ENCODE measurements at regions of chr6 and their contacts with region 1.

Region 1: GRCh38 chr6:163913045-163913444 is 498.5 kb downstream of the QKI start:
- DNase-seq: no peak
- ATAC-seq: no peak
- H3K4me3 ChIP-seq: no peak overlapping the region
- H3K4me3 Mint-ChIP-seq: no peak overlapping the region
- H3K27ac ChIP-seq: no peak overlapping the region
- H3K27ac Mint-ChIP-seq: no peak overlapping the region
- H3K4me1 ChIP-seq: no peaks in the 10 kb centered on the region
- H3K4me1 Mint-ChIP-seq: no peaks in the 10 kb centered on the region
- H3K27me3 ChIP-seq: peaks cover 0 to 3% of the 10 kb centered on the region in 2 experiments
- H3K27me3 Mint-ChIP-seq: peaks cover 9 to 13% of the 10 kb centered on the region in 2 donors

Region 2: GRCh38 chr6:163284151-163284550 is 628.9 kb before region 1 on chr6:
- CTCF ChIA-PET with region 1: no interaction called
- POLR2A ChIA-PET with region 1: no interaction called
- DNase-seq: no peak
- ATAC-seq: no peak
- H3K4me3 ChIP-seq: no peak overlapping the region
- H3K4me3 Mint-ChIP-seq: no peak overlapping the region
- H3K27ac ChIP-seq: no peak overlapping the region
- H3K27ac Mint-ChIP-seq: no peak overlapping the region
- H3K4me1 ChIP-seq: no peaks in the 10 kb centered on the region
- H3K4me1 Mint-ChIP-seq: no peaks in the 10 kb centered on the region
- H3K27me3 ChIP-seq: peaks cover 0 to 20% of the 10 kb centered on the region in 2 experiments
- H3K27me3 Mint-ChIP-seq: peaks cover 11 to 13% of the 10 kb centered on the region in 2 donors

Region 3: DNA sequence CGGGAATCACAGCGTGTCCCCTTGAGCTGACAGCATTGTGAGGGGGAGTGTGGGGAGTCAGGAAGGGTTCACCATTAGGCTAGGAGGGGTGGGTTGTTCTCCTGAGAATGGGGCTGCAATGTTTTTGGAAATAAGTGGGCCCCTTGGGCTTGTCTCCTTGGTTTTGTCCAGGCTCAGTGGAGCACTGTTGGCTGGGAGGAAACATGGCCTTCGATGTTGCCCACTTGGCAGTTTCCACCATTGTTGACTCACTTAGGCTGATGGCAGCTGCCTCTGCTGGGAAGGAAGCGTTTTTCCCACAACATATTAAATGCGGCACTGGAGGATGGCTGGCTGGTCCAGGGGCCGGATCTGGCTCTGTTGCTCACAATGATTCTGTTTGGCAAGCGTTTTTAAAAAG is 13.6 kb after region 1 on chr6:
- CTCF ChIA-PET with region 1: interaction called in 1 of 2 experiments, 12 read pairs
- POLR2A ChIA-PET with region 1: no interaction called
- DNase-seq: no peak
- ATAC-seq: no peak
- H3K4me3 ChIP-seq: no peak overlapping the region
- H3K4me3 Mint-ChIP-seq: no peak overlapping the region
- H3K27ac ChIP-seq: no peak overlapping the region
- H3K27ac Mint-ChIP-seq: no peak overlapping the region
- H3K4me1 ChIP-seq: no peaks in the 10 kb centered on the region
- H3K4me1 Mint-ChIP-seq: no peaks in the 10 kb centered on the region
- H3K27me3 ChIP-seq: peaks cover 0 to 2% of the 10 kb centered on the region in 2 experiments
- H3K27me3 Mint-ChIP-seq: peaks cover 0 to 7% of the 10 kb centered on the region in 2 donors